Activated CD8-positive, alpha-beta T cell treated with anti-CD3 and anti-CD28 coated beads for 36 hours (primary cell): ENCODE measurements at regions of chr1 and their contacts with region 1.

Region 1: DNA sequence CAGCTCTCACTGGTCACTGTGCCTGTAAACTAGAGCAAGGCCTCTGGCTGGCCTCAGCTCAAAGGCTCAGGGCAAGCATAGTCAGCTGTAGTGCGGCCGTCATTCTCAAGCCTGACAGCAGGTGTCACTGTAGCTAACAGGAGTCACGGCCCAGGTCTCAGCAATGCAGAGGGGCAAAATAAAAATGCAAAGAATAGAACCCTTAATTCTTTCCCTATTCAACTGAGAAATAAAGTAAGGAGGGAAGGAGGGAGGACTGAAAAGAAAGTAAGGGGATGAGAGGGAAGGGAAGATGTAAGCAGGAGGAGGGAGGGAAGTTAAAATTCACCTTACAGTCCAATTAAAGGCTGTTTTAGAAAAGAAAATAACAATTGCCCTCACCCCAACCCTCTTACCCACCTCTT is 106.1 kb downstream of the KIAA0319L start:
- DNase-seq: peak; percentile 89
- ATAC-seq: peak; percentile 92
- H3K4me3 Mint-ChIP-seq: no peak overlapping the region
- H3K27ac Mint-ChIP-seq: no peak overlapping the region
- H3K4me1 Mint-ChIP-seq: peaks cover 32% of the 10 kb centered on the region
- H3K27me3 Mint-ChIP-seq: no peaks in the 10 kb centered on the region
- CTCF ChIP-seq: peak; percentile 74

Region 2: DNA sequence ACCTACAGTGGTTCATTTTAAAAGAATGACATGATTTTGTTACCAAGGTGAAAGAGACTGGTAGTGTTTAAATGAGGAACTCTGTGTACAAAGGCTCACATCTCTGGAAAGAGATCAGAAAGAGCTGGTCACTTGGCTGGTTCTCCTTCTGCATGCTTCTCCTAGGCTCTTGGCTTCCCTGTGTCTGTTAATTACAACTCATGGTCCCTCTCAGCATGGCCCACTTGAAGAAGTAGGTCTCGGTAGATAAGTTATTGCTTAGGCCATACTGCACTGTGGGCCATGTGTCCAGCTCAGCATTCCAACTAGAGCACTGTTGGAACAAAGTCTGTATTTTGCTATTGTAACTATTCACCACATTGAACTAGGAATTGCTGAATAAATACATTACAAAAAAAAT is 15.0 kb after region 1 on chr1:
- CTCF ChIA-PET with region 1: interaction called, 22 read pairs
- POLR2A ChIA-PET with region 1: no interaction called
- intact Hi-C with region 1: no loop called
- DNase-seq: no peak
- ATAC-seq: no peak
- H3K4me3 Mint-ChIP-seq: no peak overlapping the region
- H3K27ac Mint-ChIP-seq: no peak overlapping the region
- H3K4me1 Mint-ChIP-seq: peaks cover 15% of the 10 kb centered on the region
- H3K27me3 Mint-ChIP-seq: no peaks in the 10 kb centered on the region
- CTCF ChIP-seq: no peak

Region 3: DNA sequence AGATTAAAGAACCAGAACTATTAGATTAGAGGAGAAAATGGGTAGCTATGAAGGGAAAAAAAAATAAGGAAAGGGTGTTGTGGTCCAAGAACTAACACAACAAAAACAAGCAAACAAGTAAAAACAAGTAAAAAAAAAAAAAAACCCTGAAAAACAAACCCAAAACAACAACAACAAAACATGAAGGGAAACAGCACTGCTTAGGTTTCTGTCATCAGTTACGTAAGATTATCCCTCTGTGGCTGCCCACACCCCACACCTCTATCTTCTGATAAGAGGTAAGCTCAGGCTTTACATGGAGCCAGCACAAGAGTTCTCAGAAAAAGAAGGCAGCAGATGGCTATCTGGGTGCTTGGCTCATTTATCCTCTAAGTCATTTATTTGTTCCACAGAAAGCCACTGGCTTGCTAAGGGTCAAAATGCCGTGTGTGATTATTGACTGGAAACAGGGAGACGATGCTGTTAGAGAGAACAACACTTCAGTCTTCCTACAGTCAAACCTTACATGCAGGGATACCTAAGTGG is 48.6 kb after region 1 on chr1:
- CTCF ChIA-PET with region 1: interaction called, 12 read pairs
- POLR2A ChIA-PET with region 1: no interaction called
- intact Hi-C with region 1: no loop called
- DNase-seq: peak; percentile 30
- ATAC-seq: peak; percentile 34
- H3K4me3 Mint-ChIP-seq: no peak overlapping the region
- H3K27ac Mint-ChIP-seq: no peak overlapping the region
- H3K4me1 Mint-ChIP-seq: peaks cover 22% of the 10 kb centered on the region
- H3K27me3 Mint-ChIP-seq: no peaks in the 10 kb centered on the region
- CTCF ChIP-seq: no peak

Region 4: DNA sequence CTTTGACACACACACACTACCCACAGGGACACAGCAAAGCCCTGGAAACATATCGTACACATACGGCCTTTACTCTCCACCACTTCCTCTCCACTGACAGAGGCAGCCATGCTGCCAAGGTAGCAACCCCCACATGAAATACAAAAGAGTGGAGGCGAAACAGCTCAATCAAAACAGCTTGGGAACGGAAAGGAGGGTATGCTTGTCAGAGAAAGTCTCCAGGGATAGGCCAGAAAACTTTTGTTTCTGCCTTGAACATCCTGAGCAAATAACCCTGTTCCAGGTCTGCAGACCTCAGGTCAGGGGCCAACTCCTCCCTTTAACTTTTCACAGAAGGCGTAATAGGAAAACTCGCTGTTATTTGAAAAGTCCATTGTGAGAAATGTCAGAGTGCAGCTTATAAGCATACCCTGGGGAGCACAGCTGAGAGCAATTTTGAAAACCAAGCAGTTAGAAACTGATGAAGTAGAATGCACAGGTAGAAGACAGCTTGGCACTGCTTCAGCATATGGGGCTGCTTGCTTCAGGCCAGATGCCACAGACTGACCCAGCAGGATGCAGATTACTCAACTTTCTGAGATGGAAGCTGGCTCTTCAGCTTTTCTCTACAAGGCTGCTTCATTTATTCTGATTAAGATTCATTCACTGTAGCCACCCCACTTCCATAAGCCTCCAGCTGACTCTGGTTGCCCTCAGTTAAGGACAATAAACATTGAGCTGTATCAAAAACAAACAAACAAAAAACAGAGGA is 88.1 kb after region 1 on chr1:
- CTCF ChIA-PET with region 1: interaction called, 140 read pairs
- POLR2A ChIA-PET with region 1: no interaction called
- intact Hi-C with region 1: no loop called
- DNase-seq: peak; percentile 61
- ATAC-seq: peak; percentile 82
- H3K4me3 Mint-ChIP-seq: peak overlapping the region; percentile 76
- H3K27ac Mint-ChIP-seq: peak overlapping the region; percentile 98
- H3K4me1 Mint-ChIP-seq: peaks cover 78% of the 10 kb centered on the region
- H3K27me3 Mint-ChIP-seq: no peaks in the 10 kb centered on the region
- CTCF ChIP-seq: no peak

Region 5: DNA sequence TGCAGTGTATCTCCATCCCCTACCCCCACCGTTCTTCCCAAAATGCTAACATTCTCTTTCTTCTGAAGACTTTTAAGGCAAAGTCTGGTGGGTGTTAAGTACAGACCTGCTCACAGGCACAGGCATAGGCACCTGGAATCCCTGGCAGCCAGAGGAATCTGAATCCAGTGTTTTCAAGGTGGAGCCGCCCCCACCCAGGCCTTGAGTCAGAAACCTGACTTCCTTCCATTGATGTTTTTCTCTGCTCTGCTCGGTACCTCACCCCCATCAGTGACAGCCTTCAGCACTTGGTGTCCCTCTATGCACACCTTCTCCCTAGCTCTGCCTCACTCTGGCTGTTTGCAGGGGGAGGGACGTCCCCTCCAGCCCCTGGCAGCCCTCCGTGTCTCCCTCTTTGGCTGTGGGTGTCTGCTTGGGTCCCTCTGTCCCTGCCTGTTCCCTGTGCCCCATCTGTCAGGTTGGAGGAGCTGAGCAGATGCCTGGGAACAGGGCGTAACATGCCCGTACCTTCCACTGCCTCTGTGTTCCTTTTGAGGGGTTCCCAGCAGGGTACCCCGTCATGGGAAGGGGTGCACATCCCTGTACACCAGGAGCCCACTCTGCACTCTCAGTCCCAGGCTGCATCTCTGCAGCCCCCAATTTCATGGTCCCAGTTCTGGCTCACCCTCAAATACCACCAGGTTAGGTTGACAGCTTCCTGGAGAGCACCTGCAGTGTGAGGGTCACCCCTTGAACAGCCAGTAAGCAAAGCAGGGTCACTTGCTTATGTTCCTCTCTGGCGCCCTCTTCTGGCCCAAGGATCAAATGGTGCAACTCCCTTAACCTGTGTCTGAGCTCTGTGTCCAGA is 113.1 kb after region 1 on chr1:
- CTCF ChIA-PET with region 1: interaction called, 68 read pairs
- POLR2A ChIA-PET with region 1: interaction called, 5 read pairs
- intact Hi-C with region 1: loop called (anchors 5 kb)
- DNase-seq: peak; percentile 93
- ATAC-seq: peak; percentile 83
- H3K4me3 Mint-ChIP-seq: no peak overlapping the region
- H3K27ac Mint-ChIP-seq: peak overlapping the region; percentile 50
- H3K4me1 Mint-ChIP-seq: peaks cover 24% of the 10 kb centered on the region
- H3K27me3 Mint-ChIP-seq: no peaks in the 10 kb centered on the region
- CTCF ChIP-seq: peak; percentile 83

Region 6: GRCh38 chr1:35726450-35727433 is 275.6 kb after region 1 on chr1:
- CTCF ChIA-PET with region 1: interaction called, 13 read pairs
- POLR2A ChIA-PET with region 1: no interaction called
- intact Hi-C with region 1: no loop called
- DNase-seq: peak; percentile 67
- ATAC-seq: peak; percentile 90
- H3K4me3 Mint-ChIP-seq: no peak overlapping the region
- H3K27ac Mint-ChIP-seq: no peak overlapping the region
- H3K4me1 Mint-ChIP-seq: no peaks in the 10 kb centered on the region
- H3K27me3 Mint-ChIP-seq: no peaks in the 10 kb centered on the region
- CTCF ChIP-seq: peak; percentile 85